ENCODE measurements at regions of chr7 and their contacts with region 1.

Region 1: GRCh38 chr7:130292682-130293257 is at the start of gene CPA4:
- DNase-seq: peak in 2 of 6 donors; percentile 25 to 48
- ATAC-seq: peak in 2 of 4 donors; percentile 4 to 11
- H3K4me3 ChIP-seq: no peak within 1 kb of the TSS
- H3K27ac ChIP-seq: peak within 1 kb of the TSS in 3 of 4 donors; percentile 17 to 86 (median 78)
- H3K4me1 ChIP-seq: no peaks in the 10 kb centered on the region
- H3K27me3 ChIP-seq: no peaks in the 10 kb centered on the region
- CTCF ChIP-seq: no peak
- total RNA-seq, gene CPA4: 4.5 to 12.4 (median 5.9) TPM

Region 2: GRCh38 chr7:129689995-129690581 is 602.7 kb before region 1 on chr7:
- intact Hi-C with region 1: no loop called
- DNase-seq: no peak
- ATAC-seq: peak in 2 of 4 donors; percentile 37 to 66
- H3K4me3 ChIP-seq: no peak overlapping the region
- H3K27ac ChIP-seq: no peak overlapping the region
- H3K4me1 ChIP-seq: no peaks in the 10 kb centered on the region
- H3K27me3 ChIP-seq: no peaks in the 10 kb centered on the region
- CTCF ChIP-seq: no peak

Region 3: DNA sequence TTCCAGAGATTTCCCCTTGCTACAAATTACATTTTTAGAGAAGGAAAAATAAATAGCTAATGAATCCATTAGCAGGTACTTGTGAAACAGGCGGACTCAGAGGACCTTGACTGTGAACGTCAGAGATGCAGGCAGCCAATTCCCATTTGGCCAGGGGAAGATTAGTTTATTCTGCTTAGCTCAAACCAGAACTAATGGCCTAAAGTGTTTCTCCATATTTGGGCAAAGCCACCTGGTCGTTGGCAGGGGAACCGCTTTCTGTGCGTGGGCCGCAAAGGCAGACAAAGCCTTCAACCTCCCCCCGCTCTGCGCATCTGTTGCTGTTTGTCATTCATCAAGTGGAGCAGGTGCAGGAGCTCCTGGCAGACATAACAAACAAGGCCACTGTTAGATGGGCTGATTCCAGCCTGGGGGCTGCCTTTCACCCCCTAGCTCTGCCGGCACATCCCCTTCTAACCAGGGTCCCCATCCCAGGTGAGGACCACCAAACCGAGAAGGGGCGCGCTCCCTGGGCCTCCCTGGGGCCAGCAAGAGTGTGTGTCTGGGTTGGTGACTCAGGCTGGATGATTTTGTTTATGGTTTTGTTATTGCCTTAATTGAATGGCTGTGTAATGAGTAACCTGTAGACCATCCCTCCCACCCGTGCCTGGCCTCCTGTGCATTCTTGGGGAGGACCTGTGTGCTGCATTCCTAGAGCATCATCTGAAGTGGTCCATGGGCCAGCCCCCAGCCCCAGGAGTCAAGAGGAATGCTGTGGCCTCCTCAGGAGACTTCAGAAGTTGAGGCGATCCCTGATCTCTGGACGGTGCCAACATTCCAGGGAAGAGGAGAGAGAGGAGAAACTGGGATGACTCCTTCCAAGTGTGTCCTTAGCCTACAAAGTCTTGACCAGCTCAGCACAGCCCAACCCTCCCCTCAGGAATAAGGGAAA is 73.0 kb after region 1 on chr7:
- intact Hi-C with region 1: loop called in 2 of 3 experiments (anchors 5 to 10 kb)
- DNase-seq: peak in 3 of 6 donors; percentile 57 to 72 (median 66)
- ATAC-seq: peak; percentile 52 to 76 (median 70)
- H3K4me3 ChIP-seq: no peak overlapping the region
- H3K27ac ChIP-seq: peak overlapping the region in 3 of 4 donors; percentile 28 to 65 (median 35)
- H3K4me1 ChIP-seq: peaks cover 25 to 45% (median 39%) of the 10 kb centered on the region in 3 donors
- H3K27me3 ChIP-seq: no peaks in the 10 kb centered on the region
- CTCF ChIP-seq: no peak

Region 4: GRCh38 chr7:130379921-130380860 is 87.4 kb after region 1 on chr7 and contains the start of gene CPA1:
- intact Hi-C with region 1: loop called in 1 of 3 experiments (anchors 5 kb)
- DNase-seq: peak; percentile 85 to 98 (median 96)
- ATAC-seq: peak; percentile 57 to 74 (median 68)
- H3K4me3 ChIP-seq: peak within 1 kb of the TSS; percentile 14 to 64 (median 44)
- H3K27ac ChIP-seq: peak within 1 kb of the TSS; percentile 91 to 96 (median 96)
- H3K4me1 ChIP-seq: peaks cover 0 to 16% (median 7%) of the 10 kb centered on the region in 3 donors
- H3K27me3 ChIP-seq: no peaks in the 10 kb centered on the region
- CTCF ChIP-seq: no peak
- total RNA-seq, gene CPA1: 17,933 to 50,686 (median 40,969) TPM